ENCODE measurements at regions of chr7 and their contacts with region 1.

Region 1: GRCh38 chr7:104923010-104923421 is 91.0 kb upstream of the KMT2E start:
- DNase-seq: peak; percentile 86
- ATAC-seq: peak; percentile 96
- H3K4me3 ChIP-seq: no peak overlapping the region
- H3K27ac ChIP-seq: no peak overlapping the region
- H3K4me1 ChIP-seq: no peaks in the 10 kb centered on the region
- H3K27me3 ChIP-seq: no peaks in the 10 kb centered on the region
- CTCF ChIP-seq: peak; percentile 89

Region 2: DNA sequence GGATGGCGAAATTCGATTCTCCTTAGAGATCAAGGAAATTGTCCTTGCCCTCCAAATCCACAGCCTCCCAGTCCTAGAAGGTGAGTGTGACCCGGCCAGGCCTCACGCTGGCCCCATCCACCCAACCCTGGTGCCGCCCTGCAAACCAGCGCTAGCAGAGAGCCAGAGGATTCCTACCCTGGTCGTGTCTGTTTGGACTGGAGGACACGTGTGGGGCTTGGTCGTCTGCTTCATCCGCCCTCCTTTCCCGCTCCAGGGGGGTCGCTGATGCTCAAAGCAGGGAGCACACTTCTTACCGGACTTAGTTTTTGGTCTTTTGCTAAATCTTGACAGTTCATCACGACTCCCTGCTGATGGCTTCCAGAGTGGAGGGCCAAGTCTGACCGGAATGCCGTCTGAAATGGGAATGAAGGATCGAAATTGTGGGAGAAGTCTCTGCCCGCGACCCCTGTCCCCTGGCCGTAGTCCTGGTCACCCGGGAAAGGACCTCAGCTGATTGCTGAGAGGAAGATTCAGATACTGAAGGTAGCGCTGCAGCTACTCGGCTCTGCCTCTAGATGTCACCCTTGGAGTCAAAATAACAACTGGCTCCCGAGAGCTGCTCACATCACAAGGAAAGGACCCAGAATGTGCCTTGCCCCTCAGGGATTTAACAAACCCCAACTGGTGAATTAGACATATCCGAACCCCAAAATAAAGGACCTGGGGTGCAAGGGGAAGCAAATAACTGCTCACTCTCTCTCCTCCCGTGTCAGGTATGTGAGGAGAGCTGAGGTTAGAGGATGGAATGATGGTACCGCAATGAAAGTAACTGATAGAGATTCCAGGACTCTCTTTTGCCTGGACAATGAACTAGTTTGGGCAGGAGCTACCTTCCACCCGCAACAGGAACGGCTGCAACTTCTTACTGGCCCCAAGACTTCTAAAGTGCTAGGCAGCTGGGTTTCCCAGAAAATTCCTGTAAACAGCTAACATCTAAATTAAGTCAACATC is 691.7 kb before region 1 on chr7:
- CTCF ChIA-PET with region 1: no interaction called
- POLR2A ChIA-PET with region 1: no interaction called
- intact Hi-C with region 1: loop called (anchors 5 kb)
- DNase-seq: peak; percentile 61
- ATAC-seq: peak; percentile 95
- H3K4me3 ChIP-seq: no peak overlapping the region
- H3K27ac ChIP-seq: no peak overlapping the region
- H3K4me1 ChIP-seq: no peaks in the 10 kb centered on the region
- H3K27me3 ChIP-seq: peaks cover 12% of the 10 kb centered on the region
- CTCF ChIP-seq: peak; percentile 75

Region 3: GRCh38 chr7:104643587-104644217 is 279.3 kb before region 1 on chr7:
- CTCF ChIA-PET with region 1: interaction called, 7 read pairs
- POLR2A ChIA-PET with region 1: no interaction called
- intact Hi-C with region 1: loop called (anchors 1 kb)
- DNase-seq: peak; percentile 39
- ATAC-seq: peak; percentile 51
- H3K4me3 ChIP-seq: no peak overlapping the region
- H3K27ac ChIP-seq: no peak overlapping the region
- H3K4me1 ChIP-seq: no peaks in the 10 kb centered on the region
- H3K27me3 ChIP-seq: peaks cover 29% of the 10 kb centered on the region
- CTCF ChIP-seq: peak; percentile 75

Region 4: DNA sequence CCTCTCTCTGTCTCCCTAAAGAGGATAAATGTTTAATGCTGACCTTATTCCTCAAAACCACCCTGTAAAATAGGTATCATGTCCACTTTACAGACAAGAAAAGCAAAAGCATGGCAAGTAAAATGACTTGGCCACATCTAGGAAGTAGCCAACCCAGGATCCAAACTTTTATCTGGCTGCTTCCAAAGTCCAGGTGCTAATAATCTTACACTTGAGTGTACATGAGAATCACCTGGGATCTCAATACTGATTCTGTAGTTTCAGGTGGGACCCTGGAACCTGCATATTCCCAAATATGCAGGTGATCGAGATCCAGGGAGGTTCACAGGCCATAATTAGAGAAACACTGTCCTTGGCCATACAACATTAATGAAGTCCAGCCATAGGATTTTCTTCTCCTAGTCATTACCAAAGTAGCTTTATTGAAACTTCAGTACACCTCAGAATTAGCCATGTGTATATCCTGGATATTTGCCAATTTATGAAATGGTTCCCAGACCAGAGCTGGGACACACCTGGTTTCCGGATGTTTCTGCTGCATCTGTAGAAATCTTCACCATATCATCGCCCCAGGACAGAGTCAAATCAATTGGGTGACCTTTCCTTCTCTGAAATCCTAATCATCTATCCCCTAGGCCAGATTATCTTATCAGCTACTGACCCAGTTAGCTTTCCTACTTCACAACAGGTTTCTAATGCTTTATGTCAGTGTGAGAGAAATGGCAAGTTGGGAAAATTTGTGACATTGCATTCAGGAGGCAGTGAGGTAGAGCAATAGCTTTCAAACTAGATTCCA is 28.1 kb before region 1 on chr7:
- CTCF ChIA-PET with region 1: no interaction called
- POLR2A ChIA-PET with region 1: no interaction called
- intact Hi-C with region 1: no loop called
- DNase-seq: no peak
- ATAC-seq: no peak
- H3K4me3 ChIP-seq: no peak overlapping the region
- H3K27ac ChIP-seq: no peak overlapping the region
- H3K4me1 ChIP-seq: no peaks in the 10 kb centered on the region
- H3K27me3 ChIP-seq: peaks cover 18% of the 10 kb centered on the region
- CTCF ChIP-seq: no peak

Region 5: DNA sequence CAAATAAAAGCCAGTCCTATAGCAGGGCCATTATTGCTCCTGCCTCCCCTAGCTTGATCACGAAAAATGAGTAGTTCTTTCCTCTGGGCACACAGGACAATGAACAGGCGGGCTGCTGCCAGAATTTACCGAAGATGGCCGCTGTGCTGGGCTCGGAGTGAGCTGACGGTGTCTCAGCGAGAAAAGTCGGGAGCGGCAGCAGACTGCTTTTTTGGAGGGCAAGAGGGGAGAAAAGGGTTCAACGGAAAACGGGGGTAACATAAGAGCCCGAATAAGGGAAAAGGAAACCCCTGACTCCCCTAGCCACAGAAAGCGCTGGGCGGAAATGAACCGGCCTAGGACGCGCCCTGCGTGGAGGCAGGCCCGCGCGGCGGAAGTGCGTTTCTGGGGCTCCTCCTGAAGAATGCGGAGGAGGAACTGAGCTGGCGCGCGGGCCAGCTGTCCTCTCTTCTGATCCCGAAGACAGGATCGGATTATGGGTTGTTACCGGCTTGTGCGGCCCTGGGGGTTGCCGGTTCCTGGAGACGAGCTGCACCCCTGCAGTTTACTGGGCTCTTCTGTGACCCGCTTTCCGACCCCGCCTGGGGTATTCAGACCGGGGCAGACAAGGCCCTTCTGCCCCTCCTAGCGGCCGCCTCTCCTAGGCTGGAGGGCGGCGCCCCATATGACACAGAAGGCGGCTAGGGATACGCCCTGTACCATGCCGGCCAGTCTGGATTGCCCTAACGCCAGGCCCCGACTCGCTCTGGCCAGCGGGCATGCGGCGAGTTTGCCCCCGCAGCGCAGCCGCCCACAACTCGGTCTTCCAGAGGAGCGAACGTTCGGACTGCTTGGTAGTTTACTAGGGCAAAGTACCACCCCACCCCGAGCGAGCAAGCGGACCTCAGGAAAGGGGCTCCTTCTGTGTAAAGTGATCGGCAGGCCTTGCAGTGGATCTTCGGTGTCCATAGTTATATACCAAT is 60.8 kb after region 1 on chr7:
- CTCF ChIA-PET with region 1: no interaction called
- POLR2A ChIA-PET with region 1: no interaction called
- intact Hi-C with region 1: loop called (anchors 1 kb)
- DNase-seq: peak; percentile 84
- ATAC-seq: peak; percentile 94
- H3K4me3 ChIP-seq: peak overlapping the region; percentile 81
- H3K27ac ChIP-seq: peak overlapping the region; percentile 93
- H3K4me1 ChIP-seq: peaks cover 63% of the 10 kb centered on the region
- H3K27me3 ChIP-seq: no peaks in the 10 kb centered on the region
- CTCF ChIP-seq: peak; percentile 41

Region 6: GRCh38 chr7:105098863-105099515 is 176.0 kb after region 1 on chr7:
- CTCF ChIA-PET with region 1: no interaction called
- POLR2A ChIA-PET with region 1: no interaction called
- intact Hi-C with region 1: loop called (anchors 2 kb)
- DNase-seq: peak; percentile 82
- ATAC-seq: peak; percentile 68
- H3K4me3 ChIP-seq: no peak overlapping the region
- H3K27ac ChIP-seq: peak overlapping the region; percentile 53
- H3K4me1 ChIP-seq: peaks cover 52% of the 10 kb centered on the region
- H3K27me3 ChIP-seq: no peaks in the 10 kb centered on the region
- CTCF ChIP-seq: no peak

Region 7: DNA sequence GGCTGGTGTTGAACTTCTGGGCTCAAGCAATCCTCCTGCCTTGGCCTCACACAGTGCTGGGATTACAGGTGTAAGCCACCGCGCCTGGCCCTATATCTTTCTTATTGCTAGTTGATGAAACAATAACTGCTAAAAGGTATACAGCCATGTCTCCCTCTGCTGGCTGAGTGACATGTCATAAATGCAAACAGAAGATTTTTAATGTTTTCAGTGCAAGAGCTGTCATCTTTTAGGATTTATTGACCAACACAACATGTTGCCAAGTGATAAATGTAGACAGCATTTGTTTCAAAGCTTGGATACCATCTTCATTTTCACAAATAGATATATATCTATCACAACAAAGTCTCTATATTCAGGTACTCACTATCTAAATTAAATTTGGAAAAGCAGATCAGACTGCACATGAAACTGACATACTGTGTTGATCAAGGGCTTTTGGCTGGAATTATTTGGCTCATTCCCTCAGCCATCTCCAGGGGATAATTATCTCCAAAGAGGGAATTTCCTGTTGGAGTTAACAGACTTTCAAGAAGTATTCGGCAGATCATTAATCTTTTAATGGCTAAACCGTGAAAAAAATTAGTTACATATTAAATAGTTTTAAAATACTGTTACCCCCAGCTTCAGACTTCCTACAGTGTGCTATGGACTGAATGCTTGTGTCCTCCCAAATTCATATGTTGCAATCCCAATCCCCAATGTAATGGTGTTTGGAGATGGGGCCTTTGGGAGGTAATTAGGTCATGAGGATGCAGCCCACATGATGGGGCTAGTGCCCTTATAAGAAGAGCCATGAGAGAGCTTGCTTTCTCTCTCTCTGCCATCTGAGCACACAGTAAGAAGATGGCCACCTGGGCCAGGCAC is 507.0 kb after region 1 on chr7:
- CTCF ChIA-PET with region 1: no interaction called
- POLR2A ChIA-PET with region 1: no interaction called
- intact Hi-C with region 1: loop called (anchors 1 kb)
- DNase-seq: peak; percentile 72
- ATAC-seq: peak; percentile 82
- H3K4me3 ChIP-seq: no peak overlapping the region
- H3K27ac ChIP-seq: no peak overlapping the region
- H3K4me1 ChIP-seq: no peaks in the 10 kb centered on the region
- H3K27me3 ChIP-seq: no peaks in the 10 kb centered on the region
- CTCF ChIP-seq: peak; percentile 65

Region 8: GRCh38 chr7:105512415-105512814 is 589.4 kb after region 1 on chr7:
- CTCF ChIA-PET with region 1: no interaction called
- POLR2A ChIA-PET with region 1: no interaction called
- intact Hi-C with region 1: no loop called
- DNase-seq: no peak
- ATAC-seq: no peak
- H3K4me3 ChIP-seq: no peak overlapping the region
- H3K27ac ChIP-seq: no peak overlapping the region
- H3K4me1 ChIP-seq: peaks cover 9% of the 10 kb centered on the region
- H3K27me3 ChIP-seq: no peaks in the 10 kb centered on the region
- CTCF ChIP-seq: no peak

Measured in PC-3 (cell line).